GM13976 (cell line): ENCODE measurements at regions of chrX and their contacts with region 1.

Region 1: GRCh38 chrX:19334945-19335626 is 8.6 kb upstream of the PDHA1 start:
- DNase-seq: peak; percentile 46
- CTCF ChIP-seq: peak; percentile 54

Region 2: DNA sequence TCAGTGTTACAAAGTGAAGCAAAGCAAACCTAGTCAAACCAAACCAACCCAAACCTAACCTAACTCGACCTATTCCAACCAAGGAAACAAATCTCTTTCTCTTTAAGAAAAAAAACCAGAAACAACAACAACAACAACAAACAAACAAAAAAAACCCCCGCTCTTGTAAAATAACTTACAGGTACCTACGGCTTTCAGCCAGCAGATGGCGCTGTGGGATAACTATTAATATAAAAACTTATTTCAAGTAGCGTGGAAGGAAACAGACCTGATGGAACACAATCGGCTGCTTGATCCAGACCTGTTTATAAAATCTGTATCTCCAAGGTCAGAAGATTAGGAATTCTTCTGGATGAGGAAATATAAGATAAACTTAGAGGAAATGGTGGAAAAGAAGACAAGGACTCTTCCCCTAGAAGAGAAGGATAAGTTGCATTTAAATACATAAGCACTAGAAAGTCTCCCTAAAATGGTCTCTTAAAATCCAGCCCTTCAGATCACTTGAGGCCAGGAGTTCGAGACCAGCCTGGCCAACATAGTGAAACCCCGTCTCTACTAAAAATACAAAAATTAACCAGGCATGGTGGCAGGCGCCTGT is 944.0 kb before region 1 on chrX:
- in situ Hi-C with region 1: loop called (anchors 5 kb)
- DNase-seq: peak; percentile 56
- CTCF ChIP-seq: peak; percentile 70

Region 3: GRCh38 chrX:19030805-19031204 is 304.3 kb before region 1 on chrX:
- in situ Hi-C with region 1: loop called (anchors 10 kb)
- DNase-seq: no peak
- CTCF ChIP-seq: no peak